H1 (cell line): ENCODE measurements at regions of chr10 and their contacts with region 1.

Region 1: DNA sequence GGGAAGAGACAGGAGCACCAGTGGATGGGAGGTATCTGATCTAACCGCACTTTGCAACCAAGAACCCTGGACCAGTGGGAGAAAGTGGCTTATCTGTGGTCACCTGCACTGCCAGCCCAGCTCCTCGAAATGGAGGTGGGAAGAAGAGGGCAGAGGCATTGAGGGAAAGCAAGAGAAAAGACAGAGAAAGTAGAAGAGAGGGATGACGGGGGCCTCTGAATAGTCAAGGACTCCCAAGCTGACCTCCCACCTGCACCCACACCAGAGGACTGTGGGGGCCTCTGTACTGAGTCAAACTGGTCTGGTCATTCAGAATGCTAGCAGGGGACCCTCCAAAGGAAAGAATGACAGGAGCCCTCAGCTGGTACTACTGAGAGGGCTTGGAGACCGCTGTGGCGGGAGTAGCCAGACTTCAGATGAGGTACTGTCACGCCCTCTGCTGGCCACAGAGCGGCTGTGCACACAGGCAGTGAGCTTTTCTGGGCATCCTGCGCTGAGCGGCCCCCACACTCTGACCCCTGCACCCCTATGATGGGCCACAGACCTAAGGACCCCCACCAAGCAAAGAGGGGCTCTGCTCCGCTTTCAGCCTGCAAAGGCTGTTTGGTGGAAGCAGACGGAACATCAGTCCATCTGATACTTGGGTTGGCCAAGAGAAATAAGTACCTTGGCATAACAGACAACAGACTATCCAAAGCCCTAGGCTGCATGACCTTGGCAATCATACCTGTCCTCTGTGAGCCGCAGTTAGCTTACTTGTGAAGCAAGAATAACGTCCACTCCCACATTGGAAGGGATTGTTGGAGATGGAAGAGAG is 112.9 kb downstream of the COL13A1 start:
- DNase-seq: peak; percentile 27 to 93
- H3K4me3 ChIP-seq: no peak overlapping the region
- H3K27ac ChIP-seq: no peak overlapping the region
- H3K4me1 ChIP-seq: peaks cover 0 to 5% (median 2%) of the 10 kb centered on the region in 4 experiments; a peak in 4 of 7 replicates
- H3K27me3 ChIP-seq: peaks cover 0 to 3% (median 0%) of the 10 kb centered on the region in 4 experiments; a peak in 2 of 7 replicates
- CTCF ChIP-seq: peak; percentile 96 to 99 (median 96)
- EP300 ChIP-seq: no peak
- POLR2A ChIP-seq: no peak
- RAD21 ChIP-seq: peak; percentile 96 to 97

Region 2: DNA sequence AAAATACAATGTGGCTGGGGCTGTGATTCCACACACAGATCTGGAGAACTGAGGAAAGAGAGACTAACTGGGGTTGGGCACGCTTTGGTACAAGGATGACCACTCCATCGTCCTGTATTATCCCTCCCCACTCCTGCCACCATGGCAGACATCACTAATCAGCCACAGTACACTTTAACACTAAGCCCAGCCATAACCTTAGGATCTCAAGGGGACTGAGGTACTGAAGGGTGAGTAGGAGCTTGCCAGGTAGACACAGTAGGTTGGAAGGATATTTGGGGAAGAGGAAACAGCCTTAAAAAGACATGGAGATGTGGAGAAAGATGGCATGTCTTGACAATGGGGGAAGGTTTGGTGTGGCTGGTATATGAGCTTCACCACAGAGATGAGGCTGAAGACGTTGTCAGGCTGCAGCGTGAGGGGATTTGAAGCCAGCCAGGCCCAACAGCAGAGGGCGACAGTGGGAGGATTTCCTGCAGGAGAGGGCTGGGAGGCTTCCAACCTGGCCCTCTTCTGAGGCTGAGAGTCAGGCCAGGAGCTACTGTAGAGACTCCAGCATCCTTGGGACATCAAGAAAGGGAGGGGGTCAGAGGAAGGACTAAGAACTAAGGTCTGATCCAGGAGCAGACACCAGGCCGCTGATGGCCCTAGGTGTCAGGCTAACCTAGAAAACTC is 171.5 kb before region 1 on chr10:
- CTCF ChIA-PET with region 1: interaction called, 62 read pairs
- POLR2A ChIA-PET with region 1: interaction called, 3 read pairs
- DNase-seq: peak; percentile 19 to 86
- H3K4me3 ChIP-seq: no peak overlapping the region
- H3K27ac ChIP-seq: no peak overlapping the region
- H3K4me1 ChIP-seq: peaks cover 0 to 9% (median 1%) of the 10 kb centered on the region in 4 experiments; a peak in 3 of 7 replicates
- H3K27me3 ChIP-seq: no peaks in the 10 kb centered on the region
- CTCF ChIP-seq: peak; percentile 89 to 94 (median 90)
- EP300 ChIP-seq: no peak
- POLR2A ChIP-seq: no peak
- RAD21 ChIP-seq: peak; percentile 66 to 81

Region 3: GRCh38 chr10:69786791-69787190 is 127.8 kb before region 1 on chr10:
- CTCF ChIA-PET with region 1: interaction called, 321 read pairs
- POLR2A ChIA-PET with region 1: no interaction called
- DNase-seq: no peak
- H3K4me3 ChIP-seq: no peak overlapping the region
- H3K27ac ChIP-seq: no peak overlapping the region
- H3K4me1 ChIP-seq: peaks cover 0 to 3% (median 0%) of the 10 kb centered on the region in 4 experiments; a peak in 1 of 7 replicates
- H3K27me3 ChIP-seq: peaks cover 0 to 5% (median 0%) of the 10 kb centered on the region in 4 experiments; a peak in 1 of 7 replicates
- CTCF ChIP-seq: peak in 2 of 3 experiments; percentile 62 to 64; a peak in 3 of 4 replicates
- EP300 ChIP-seq: no peak
- POLR2A ChIP-seq: no peak
- RAD21 ChIP-seq: peak; percentile 82 to 85

Region 4: DNA sequence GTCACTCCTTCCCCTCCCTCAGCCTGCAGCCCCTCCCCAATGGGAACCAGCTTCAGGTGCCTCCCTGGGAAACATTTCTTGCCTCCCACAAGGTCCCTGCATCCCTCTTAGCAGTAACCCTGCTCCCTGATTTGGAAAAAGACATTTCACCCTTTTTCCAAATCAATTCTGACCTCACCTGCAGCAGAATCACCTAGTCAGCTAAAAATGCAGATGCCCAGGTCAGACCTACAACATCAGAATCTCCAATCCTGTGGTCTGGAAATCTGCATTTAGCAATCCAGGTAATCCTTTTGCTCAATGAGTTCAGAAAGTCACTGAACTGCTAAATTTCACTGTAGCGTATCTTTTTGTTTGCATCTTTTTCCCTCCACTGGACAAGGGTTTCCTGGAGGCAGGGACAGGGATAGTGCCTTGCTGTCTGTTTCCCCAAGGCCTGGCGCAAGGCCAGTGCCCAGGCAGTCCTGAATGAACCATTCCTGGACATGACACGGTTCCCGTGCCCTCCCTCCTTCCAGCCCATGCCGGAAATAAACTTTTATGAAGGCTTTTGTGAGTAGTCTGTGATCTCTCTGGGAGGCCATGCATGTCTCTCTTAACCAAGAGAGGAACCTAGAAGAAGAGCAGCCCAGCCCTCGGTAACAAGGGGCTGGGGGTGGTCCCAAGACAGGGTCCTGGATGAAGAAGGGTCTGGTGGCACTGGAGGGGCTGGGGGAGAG is 68.9 kb before region 1 on chr10:
- CTCF ChIA-PET with region 1: interaction called, 29 read pairs
- POLR2A ChIA-PET with region 1: interaction called, 4 read pairs
- DNase-seq: no peak
- H3K4me3 ChIP-seq: 0 out of 8 replicates have a peak overlapping the region, but pooled peaks of 1 of the 4 experiments have one; percentile 2
- H3K27ac ChIP-seq: no peak overlapping the region
- H3K4me1 ChIP-seq: peaks cover 11 to 43% (median 25%) of the 10 kb centered on the region in 4 experiments
- H3K27me3 ChIP-seq: no peaks in the 10 kb centered on the region
- CTCF ChIP-seq: no peak
- EP300 ChIP-seq: no peak
- POLR2A ChIP-seq: no peak
- RAD21 ChIP-seq: no peak

Region 5: DNA sequence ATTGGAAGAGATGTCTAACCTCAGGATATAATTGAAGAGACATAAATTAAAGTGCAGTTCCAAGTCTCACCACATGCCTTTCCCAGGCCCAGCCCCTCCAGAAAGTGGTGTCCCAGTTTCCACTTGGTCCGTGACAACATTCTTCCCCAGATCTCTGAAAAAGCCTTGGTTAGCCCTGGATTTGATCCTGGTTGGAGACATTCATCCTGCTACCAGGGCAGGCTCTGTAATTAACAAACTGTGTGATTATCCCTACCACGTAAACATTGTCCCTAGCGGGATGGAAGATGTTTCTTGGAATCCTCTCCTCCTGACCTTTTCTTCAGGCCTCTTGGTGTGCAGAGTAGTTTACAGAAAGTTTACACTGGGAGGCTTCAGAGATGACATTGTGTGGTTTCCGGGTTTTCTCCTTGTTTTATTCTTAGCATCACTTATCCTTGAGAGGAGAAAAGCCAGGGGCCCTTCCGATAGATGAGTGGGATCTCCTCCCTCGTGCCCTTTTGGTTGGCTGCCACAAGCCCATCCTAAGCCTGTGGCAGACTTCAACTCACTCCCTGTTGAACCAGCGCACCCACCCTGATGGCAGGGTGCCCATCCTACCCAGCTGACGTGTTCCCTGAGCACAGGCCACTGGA is 29.1 kb before region 1 on chr10:
- CTCF ChIA-PET with region 1: interaction called, 60 read pairs
- POLR2A ChIA-PET with region 1: no interaction called
- DNase-seq: no peak
- H3K4me3 ChIP-seq: no peak overlapping the region
- H3K27ac ChIP-seq: no peak overlapping the region
- H3K4me1 ChIP-seq: peaks cover 0 to 10% (median 7%) of the 10 kb centered on the region in 4 experiments; a peak in 6 of 7 replicates
- H3K27me3 ChIP-seq: no peaks in the 10 kb centered on the region
- CTCF ChIP-seq: peak in 2 of 3 experiments; percentile 38 to 50; a peak in 2 of 4 replicates
- EP300 ChIP-seq: no peak
- POLR2A ChIP-seq: no peak
- RAD21 ChIP-seq: no peak; a peak in 1 of 4 replicates

Region 6: DNA sequence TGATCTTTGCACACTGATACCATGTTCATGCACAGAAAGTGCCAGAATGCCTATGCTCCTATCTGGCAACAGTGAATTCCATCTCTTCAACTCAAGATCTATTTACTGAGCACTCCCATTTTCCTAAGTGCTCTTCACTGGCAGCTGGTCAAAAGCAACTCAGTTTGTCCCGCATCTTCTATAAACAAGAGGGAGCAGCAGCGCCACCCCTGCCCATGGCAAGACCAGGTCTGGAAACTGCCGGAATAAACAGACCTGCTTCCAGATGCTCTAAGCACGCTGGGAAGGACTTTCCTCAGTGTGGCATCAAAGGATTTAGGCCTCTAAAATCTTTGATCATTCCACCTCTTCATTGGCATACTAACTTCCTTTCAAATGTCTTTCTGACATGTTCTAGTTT is 33.7 kb after region 1 on chr10:
- CTCF ChIA-PET with region 1: interaction called, 17 read pairs
- POLR2A ChIA-PET with region 1: no interaction called
- DNase-seq: no peak
- H3K4me3 ChIP-seq: no peak overlapping the region
- H3K27ac ChIP-seq: no peak overlapping the region
- H3K4me1 ChIP-seq: peaks cover 8 to 10% (median 9%) of the 10 kb centered on the region in 4 experiments; a peak in 6 of 7 replicates
- H3K27me3 ChIP-seq: no peaks in the 10 kb centered on the region
- CTCF ChIP-seq: peak in 1 of 3 experiments; percentile 17; a peak in 1 of 4 replicates
- EP300 ChIP-seq: no peak
- POLR2A ChIP-seq: no peak
- RAD21 ChIP-seq: peak in 1 of 2 experiments; percentile 13; a peak in 1 of 4 replicates